ENCODE measurements at regions of chr2 and their contacts with region 1.

Region 1: DNA sequence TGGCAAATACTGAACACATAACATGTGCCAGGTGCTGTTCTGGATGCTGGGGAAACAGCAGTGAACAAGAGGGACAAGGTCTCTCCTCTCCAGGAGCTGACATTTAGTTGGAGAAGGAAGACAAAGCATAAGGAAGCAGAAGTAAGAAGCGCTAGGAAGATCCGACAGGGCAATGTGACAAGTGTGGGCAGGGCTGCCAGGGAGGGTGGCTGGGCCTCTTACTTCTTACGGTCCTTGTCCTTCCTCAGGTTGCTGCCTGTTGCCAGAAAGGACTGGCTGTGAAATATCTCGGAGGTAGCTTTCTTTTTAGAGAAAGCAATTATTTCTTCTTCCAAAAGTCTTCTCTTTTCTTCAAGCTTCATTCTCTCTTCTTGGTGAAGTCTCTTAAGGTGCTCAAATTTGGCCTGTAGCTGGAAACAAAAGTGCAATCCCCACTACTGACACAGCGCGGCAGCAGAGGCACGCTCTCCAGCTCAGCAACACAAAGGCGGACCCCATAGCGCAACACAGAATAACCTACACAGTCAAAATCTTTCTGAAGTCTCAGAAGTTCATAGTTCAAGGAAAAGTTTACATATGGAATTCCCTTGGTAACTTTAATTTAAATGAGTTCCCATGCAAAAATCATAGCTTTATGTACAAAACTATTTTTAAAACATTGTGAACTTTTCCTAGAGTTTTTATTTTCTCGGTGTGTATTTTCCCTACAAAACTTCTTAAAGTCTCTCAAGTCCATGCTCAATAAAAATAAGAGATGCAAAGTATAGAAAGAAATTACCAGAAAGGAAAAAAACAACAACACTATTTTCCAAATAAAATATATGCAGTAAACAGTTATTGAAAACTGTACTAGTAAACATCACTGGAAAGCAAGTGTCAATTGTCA is 67.7 kb downstream of the SEPTIN10 start:
- DNase-seq: peak; percentile 24 to 69
- ATAC-seq: peak; percentile 89 to 92
- H3K4me3 ChIP-seq: no peak overlapping the region
- H3K27ac ChIP-seq: no peak overlapping the region
- H3K4me1 ChIP-seq: peaks cover 4% of the 10 kb centered on the region; the same call in 2 of the 3 replicates
- CTCF ChIP-seq: peak; percentile 90
- EP300 ChIP-seq: no peak
- POLR2A ChIP-seq: no peak
- RAD21 ChIP-seq: peak; percentile 96 to 97

Region 2: DNA sequence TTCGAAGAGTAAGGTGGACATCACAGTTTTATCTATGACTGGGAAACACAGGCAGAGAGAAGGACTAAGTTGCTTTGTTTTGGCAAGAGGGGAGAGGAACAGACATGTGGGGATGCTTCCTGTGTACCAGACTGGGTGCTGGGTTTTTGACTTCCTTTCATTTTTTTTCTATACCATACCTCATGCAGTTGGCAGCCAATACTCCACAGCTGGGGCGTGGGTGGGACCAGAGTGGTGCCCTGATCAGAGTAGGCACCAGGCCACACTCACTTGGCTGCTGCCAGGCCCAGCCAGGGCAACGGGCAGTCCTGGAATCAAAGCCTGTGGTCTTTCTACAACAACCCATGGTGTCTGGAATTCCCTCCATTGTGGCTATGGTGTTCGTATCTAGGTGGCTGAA is 371.9 kb before region 1 on chr2:
- CTCF ChIA-PET with region 1: no interaction called
- POLR2A ChIA-PET with region 1: no interaction called
- DNase-seq: no peak
- ATAC-seq: no peak
- H3K4me3 ChIP-seq: no peak overlapping the region
- H3K27ac ChIP-seq: no peak overlapping the region
- H3K4me1 ChIP-seq: no peaks in the 10 kb centered on the region
- CTCF ChIP-seq: no peak
- EP300 ChIP-seq: no peak
- POLR2A ChIP-seq: no peak
- RAD21 ChIP-seq: no peak

Region 3: GRCh38 chr2:109419960-109420370 is 126.1 kb before region 1 on chr2:
- CTCF ChIA-PET with region 1: no interaction called
- POLR2A ChIA-PET with region 1: no interaction called
- DNase-seq: no peak
- ATAC-seq: no peak
- H3K4me3 ChIP-seq: no peak overlapping the region
- H3K27ac ChIP-seq: no peak overlapping the region
- H3K4me1 ChIP-seq: no peaks in the 10 kb centered on the region
- CTCF ChIP-seq: no peak
- EP300 ChIP-seq: no peak
- POLR2A ChIP-seq: no peak
- RAD21 ChIP-seq: no peak

Region 4: GRCh38 chr2:109516445-109517117 is 29.5 kb before region 1 on chr2:
- CTCF ChIA-PET with region 1: interaction called, 10 read pairs
- POLR2A ChIA-PET with region 1: no interaction called
- DNase-seq: peak; percentile 65 to 88
- ATAC-seq: peak; percentile 86 to 98
- H3K4me3 ChIP-seq: no peak overlapping the region
- H3K27ac ChIP-seq: peak overlapping the region in 1 of 2 experiments; percentile 20; a peak in 1 of 6 replicates
- H3K4me1 ChIP-seq: peaks cover 7% of the 10 kb centered on the region; the same call in 1 of the 3 replicates
- CTCF ChIP-seq: peak; percentile 87
- EP300 ChIP-seq: no peak
- POLR2A ChIP-seq: no peak
- RAD21 ChIP-seq: peak; percentile 88 to 90

Region 5: GRCh38 chr2:109558076-109558882 is 12.2 kb after region 1 on chr2:
- CTCF ChIA-PET with region 1: interaction called, 52 read pairs
- POLR2A ChIA-PET with region 1: no interaction called
- DNase-seq: peak; percentile 46 to 87
- ATAC-seq: peak; percentile 57 to 74; a peak in 4 of 6 replicates
- H3K4me3 ChIP-seq: no peak overlapping the region
- H3K27ac ChIP-seq: peak overlapping the region; percentile 69 to 84
- H3K4me1 ChIP-seq: peaks cover 78% of the 10 kb centered on the region
- CTCF ChIP-seq: no peak
- EP300 ChIP-seq: peak; percentile 45 to 60; a peak in 2 of 5 replicates
- POLR2A ChIP-seq: no peak
- RAD21 ChIP-seq: no peak

Region 6: DNA sequence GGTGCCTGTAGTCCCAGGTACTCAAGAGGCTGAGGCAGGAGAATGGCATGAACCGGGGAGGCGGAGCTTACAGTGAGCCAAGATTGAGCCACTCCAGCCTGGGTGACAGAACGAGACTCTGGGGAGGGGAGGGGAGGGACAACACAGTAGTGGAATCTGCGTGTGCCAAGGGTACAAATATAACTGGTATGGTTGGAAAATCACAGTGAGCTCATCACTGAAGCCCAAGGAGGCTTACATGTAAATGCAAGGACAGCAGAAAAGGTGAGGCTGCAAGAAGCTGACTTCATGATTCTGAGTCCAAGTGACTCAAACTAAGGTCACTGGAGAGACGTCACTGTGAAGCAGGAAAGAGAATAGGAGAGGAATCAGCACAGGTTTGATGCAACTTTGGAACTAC is 58.5 kb after region 1 on chr2:
- CTCF ChIA-PET with region 1: interaction called, 18 read pairs
- POLR2A ChIA-PET with region 1: interaction called, 3 read pairs
- DNase-seq: peak; percentile 38 to 79
- ATAC-seq: peak; percentile 71 to 92
- H3K4me3 ChIP-seq: no peak overlapping the region
- H3K27ac ChIP-seq: peak overlapping the region; percentile 26 to 77; a peak in 5 of 6 replicates
- H3K4me1 ChIP-seq: peaks cover 52% of the 10 kb centered on the region
- CTCF ChIP-seq: no peak
- EP300 ChIP-seq: no peak
- POLR2A ChIP-seq: no peak
- RAD21 ChIP-seq: no peak

Region 7: GRCh38 chr2:109663721-109664120 is 117.7 kb after region 1 on chr2:
- CTCF ChIA-PET with region 1: interaction called, 11 read pairs
- POLR2A ChIA-PET with region 1: no interaction called
- DNase-seq: no peak
- ATAC-seq: no peak
- H3K4me3 ChIP-seq: no peak overlapping the region
- H3K27ac ChIP-seq: no peak overlapping the region
- H3K4me1 ChIP-seq: no peaks in the 10 kb centered on the region
- CTCF ChIP-seq: no peak
- EP300 ChIP-seq: no peak
- POLR2A ChIP-seq: no peak
- RAD21 ChIP-seq: no peak

Region 8: DNA sequence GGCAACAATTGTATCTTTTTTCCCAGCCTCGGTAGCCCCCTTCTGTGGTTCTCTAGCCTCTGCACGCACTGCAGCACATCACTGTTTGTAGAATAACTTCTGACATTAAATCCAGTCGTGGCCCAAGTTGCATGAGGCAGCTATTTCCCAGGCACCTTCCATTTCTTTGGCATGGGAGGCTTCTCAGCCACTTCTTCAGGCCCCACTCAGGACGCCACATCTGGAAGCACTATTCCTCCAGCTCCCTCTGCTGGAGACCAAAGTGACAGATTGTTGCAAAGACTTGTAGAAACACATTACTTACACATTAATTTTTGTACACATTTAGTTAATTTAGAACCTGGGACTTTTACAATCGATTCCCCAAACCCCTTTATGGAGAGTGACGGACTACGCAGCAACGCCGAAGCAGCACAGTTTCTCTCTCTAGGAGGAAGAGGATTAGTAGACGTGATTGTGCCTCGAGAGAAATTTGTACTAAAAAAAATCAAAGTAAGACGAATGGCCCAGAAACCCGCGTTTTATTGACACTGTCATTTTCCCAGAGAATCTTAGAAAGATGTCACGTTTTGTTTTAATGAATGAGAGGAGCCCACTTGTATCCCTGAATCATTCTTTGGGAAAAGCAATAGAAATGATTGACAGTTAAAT is 190.2 kb after region 1 on chr2:
- CTCF ChIA-PET with region 1: interaction called, 101 read pairs
- POLR2A ChIA-PET with region 1: interaction called, 3 read pairs
- DNase-seq: peak; percentile 17 to 74
- ATAC-seq: peak; percentile 70 to 90; a peak in 4 of 6 replicates
- H3K4me3 ChIP-seq: no peak overlapping the region
- H3K27ac ChIP-seq: no peak overlapping the region
- H3K4me1 ChIP-seq: 0 out of 3 replicates have a peak, but pooled peaks cover 3% of the 10 kb centered on the region
- CTCF ChIP-seq: peak; percentile 86
- EP300 ChIP-seq: no peak
- POLR2A ChIP-seq: no peak
- RAD21 ChIP-seq: peak; percentile 88 to 89